ENCODE measurements at regions of chr6 and their contacts with region 1.

Region 1: GRCh38 chr6:84967389-84967788 is 203.0 kb upstream of the TBX18 start:
- ATAC-seq: peak in 4 of 8 experiments; percentile 30 to 70 (median 68)
- H3K4me3 ChIP-seq: no peak overlapping the region
- H3K27ac ChIP-seq: no peak overlapping the region
- H3K4me1 ChIP-seq: no peaks in the 10 kb centered on the region

Region 2: GRCh38 chr6:84785671-84786070 is 181.7 kb before region 1 on chr6:
- in situ Hi-C with region 1: loop called in 2 of 9 experiments (anchors 10 to 25 kb)
- ATAC-seq: peak in 3 of 8 experiments; percentile 83 to 97 (median 91)
- H3K4me3 ChIP-seq: no peak overlapping the region
- H3K27ac ChIP-seq: no peak overlapping the region
- H3K4me1 ChIP-seq: no peaks in the 10 kb centered on the region

Region 3: GRCh38 chr6:84791233-84791632 is 176.2 kb before region 1 on chr6:
- in situ Hi-C with region 1: loop called in 2 of 9 experiments (anchors 10 to 25 kb)
- ATAC-seq: peak in 2 of 8 experiments; percentile 25 to 61
- H3K4me3 ChIP-seq: no peak overlapping the region
- H3K27ac ChIP-seq: no peak overlapping the region
- H3K4me1 ChIP-seq: no peaks in the 10 kb centered on the region

Measured in motor neuron (in vitro differentiated cells).